Activated CD8-positive, alpha-beta T cell treated with anti-CD3 and anti-CD28 coated beads for 36 hours (primary cell): ENCODE measurements at regions of chr15 and their contacts with region 1.

Region 1: GRCh38 chr15:81480645-81481053 is 106.6 kb upstream of the TMC3 start:
- DNase-seq: peak; percentile 10
- ATAC-seq: peak; percentile 30
- H3K4me3 Mint-ChIP-seq: no peak overlapping the region
- H3K27ac Mint-ChIP-seq: no peak overlapping the region
- H3K4me1 Mint-ChIP-seq: no peaks in the 10 kb centered on the region
- H3K27me3 Mint-ChIP-seq: no peaks in the 10 kb centered on the region
- CTCF ChIP-seq: peak; percentile 87

Region 2: DNA sequence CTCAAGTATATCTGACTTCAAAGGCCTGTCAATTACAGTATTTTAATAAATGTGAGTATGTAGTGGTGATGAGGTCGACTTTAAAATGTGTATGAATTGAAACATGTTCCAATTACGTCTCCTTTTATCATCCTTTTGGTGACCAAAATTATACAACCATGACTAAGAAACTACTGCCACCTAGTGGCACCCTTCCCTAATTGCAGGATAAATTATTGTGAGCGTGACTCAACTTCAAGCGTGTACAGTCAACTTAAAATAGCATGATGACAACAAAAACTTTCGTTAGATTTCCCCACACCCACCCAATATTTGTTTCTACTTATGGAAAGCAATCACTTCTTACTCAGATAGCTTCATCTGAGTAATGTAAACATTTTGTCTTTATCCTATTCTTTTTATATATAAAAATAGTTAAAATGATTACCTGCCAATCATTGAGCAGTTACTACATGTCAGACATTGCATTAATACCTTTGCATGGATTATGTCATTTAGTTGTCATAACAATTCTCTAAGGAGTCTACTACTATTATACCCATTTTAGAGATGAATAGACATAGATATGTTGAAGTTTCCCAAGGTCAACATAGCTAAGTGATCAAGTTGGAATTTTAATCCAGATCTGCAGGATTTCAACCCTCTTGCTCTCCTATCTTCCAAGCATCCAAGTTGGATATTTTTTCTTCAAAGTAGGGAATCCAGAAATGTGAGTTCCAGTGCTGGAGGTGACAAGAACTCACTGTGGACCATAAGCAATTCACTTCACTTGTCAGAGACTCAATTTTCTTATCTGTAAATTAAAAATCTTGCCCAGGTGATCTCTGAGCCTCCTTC is 459.2 kb after region 1 on chr15:
- CTCF ChIA-PET with region 1: interaction called, 10 read pairs
- POLR2A ChIA-PET with region 1: no interaction called
- intact Hi-C with region 1: loop called (anchors 10 kb)
- DNase-seq: peak; percentile 45
- ATAC-seq: no peak
- H3K4me3 Mint-ChIP-seq: no peak overlapping the region
- H3K27ac Mint-ChIP-seq: no peak overlapping the region
- H3K4me1 Mint-ChIP-seq: no peaks in the 10 kb centered on the region
- H3K27me3 Mint-ChIP-seq: peaks cover 7% of the 10 kb centered on the region
- CTCF ChIP-seq: peak; percentile 76